ENCODE measurements at regions of chr5 and their contacts with region 1.

Region 1: DNA sequence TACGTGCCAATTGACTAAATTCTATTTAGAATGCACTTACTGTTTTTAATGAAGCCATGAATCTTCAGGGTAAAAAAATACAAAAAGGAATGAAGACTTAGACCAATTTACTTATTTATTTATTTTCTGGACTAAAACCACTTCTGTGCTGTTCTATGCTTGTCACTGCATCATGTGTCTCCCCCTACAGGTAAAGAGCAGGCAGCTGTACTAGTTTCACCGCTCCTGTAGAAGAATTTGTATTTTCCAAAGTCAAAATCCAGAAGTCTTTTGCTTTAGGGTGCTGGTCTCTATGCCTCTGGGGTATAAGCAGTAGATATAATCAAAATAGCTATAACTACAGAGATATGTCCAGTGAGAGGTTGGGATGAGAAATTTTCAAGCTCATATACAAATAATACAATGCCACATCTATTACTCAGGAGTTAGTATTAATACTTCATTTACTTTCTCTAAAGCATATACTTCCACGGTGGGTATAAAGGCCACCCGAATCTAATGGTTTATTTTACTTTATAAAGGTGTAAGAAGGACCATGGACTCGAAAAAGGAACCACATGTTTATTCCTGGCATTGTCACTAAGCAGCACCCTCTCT is 591.5 kb downstream of the RAB3C start:
- DNase-seq: peak; percentile 26
- CTCF ChIP-seq: peak; percentile 59

Region 2: DNA sequence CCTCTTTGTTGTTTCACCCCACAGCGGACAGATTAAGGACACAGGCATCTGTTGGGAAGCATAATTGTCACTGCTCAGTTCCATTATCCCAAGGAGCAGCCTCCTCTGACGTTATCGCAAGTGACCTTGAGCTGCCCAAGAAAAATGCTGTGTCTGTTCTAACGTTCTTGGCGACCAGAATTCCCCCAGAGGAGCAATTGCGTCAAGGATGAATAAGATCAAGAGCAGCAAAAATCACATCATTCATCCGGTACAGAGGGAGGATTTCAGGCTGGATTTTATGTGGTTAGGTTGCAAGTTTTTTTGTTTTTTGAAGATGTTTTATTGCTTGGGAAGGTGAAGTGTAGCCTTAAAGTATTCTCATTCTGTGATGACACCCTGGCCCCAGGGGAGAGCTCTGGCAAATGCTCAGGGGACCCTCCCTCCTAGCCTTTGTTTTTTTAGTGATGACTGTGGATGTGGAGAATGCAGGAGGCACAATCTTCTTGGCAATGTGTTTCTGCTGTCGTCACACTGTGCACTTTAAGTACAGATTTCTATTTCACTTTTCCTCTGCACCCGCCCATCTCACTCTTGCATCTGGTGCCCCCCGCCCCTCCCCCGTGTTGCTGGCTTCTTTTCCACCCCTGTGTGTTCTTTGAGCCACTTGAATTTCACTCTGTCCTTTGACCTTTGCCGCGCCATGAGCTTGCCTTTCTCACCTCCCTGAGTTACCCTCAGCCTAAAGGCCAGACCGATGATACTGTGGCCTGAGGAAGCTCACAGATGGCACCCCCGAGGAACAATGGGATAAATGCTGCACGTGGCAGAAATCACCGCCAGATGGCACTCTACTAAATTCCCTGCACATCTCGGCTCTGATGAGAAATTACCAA is 283.0 kb before region 1 on chr5:
- in situ Hi-C with region 1: loop called (anchors 10 kb)
- DNase-seq: peak; percentile 48
- CTCF ChIP-seq: peak; percentile 51

Region 3: GRCh38 chr5:59039296-59040023 is 134.9 kb before region 1 on chr5:
- in situ Hi-C with region 1: loop called (anchors 10 kb)
- DNase-seq: peak; percentile 79
- CTCF ChIP-seq: no peak

Measured in GM13976 (cell line).